ENCODE measurements at regions of chr9 and their contacts with region 1.

Region 1: GRCh38 chr9:91711755-91712601 is 238.1 kb downstream of the ROR2 start:
- DNase-seq: peak; percentile 87
- H3K4me3 Mint-ChIP-seq: no peak overlapping the region
- H3K27ac Mint-ChIP-seq: no peak overlapping the region
- H3K4me1 Mint-ChIP-seq: no peaks in the 10 kb centered on the region
- H3K27me3 Mint-ChIP-seq: peaks cover 25% of the 10 kb centered on the region

Region 2: DNA sequence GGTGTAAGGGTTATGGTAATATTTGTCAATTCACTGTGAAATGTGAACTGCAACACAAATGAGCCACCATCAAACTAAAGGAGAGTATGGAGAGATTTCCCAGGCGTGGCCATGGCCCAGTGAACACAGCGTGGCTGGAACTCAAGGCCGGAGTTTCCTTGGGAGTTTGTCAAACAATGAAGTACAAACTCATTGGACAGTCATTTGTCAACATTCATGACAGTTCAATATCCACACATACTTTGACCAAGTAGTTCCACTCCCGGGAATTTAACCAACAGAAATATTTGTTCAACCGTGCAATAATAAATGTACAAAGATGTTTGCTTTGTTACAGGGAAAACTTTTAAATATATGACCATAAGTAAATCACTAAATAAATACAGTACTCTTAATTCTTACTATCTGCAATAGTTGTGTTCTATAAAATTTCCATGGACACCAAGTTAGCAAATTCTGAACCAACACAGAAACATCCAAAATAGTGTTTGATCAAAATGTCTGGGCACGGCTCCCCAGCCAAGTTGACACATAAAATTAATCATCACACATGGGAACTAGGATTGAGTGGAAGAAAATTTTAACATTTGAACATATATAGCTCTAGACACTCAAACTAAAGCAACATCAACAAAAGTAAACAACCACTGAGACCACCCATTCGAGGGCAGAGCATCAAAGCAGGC is 1156.5 kb before region 1 on chr9:
- CTCF ChIA-PET with region 1: no interaction called
- POLR2A ChIA-PET with region 1: no interaction called
- intact Hi-C with region 1: no loop called
- DNase-seq: no peak
- H3K4me3 Mint-ChIP-seq: no peak overlapping the region
- H3K27ac Mint-ChIP-seq: no peak overlapping the region
- H3K4me1 Mint-ChIP-seq: no peaks in the 10 kb centered on the region
- H3K27me3 Mint-ChIP-seq: no peaks in the 10 kb centered on the region

Region 3: DNA sequence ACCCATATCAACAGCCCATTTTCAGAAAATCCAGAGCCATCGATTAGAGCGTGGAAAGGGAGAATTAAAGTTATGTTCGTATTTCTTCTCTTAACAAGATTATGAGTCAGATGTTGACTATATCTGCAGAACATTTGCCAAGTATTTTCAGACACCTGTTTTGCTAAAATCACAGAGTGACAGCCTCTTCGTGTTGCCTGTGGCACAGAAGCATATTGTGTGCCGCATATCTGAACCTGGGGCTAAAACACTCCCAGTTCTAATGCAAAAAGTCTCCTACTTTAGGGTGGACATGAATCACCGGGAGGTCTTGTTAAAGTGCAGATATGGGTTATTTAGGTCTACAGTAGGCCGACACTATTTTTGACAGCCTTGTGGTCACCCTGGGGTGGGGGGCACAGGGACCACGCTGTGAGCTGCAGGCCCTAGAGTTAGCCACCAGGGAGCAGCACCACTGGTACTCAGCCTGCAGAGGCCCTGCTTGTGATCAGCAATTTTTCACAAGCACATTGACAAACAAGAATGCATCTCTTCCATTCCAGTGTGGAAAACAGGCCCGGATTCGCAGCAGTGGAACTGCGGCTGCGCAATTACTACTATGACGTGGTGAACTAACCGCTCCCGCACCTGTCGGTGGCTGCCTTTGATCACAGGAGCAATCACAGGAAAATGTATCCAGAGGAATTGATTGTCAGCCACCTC is 816.8 kb before region 1 on chr9:
- CTCF ChIA-PET with region 1: no interaction called
- POLR2A ChIA-PET with region 1: no interaction called
- intact Hi-C with region 1: no loop called
- DNase-seq: no peak
- H3K4me3 Mint-ChIP-seq: no peak overlapping the region
- H3K27ac Mint-ChIP-seq: no peak overlapping the region
- H3K4me1 Mint-ChIP-seq: no peaks in the 10 kb centered on the region
- H3K27me3 Mint-ChIP-seq: peaks cover 4% of the 10 kb centered on the region

Region 4: DNA sequence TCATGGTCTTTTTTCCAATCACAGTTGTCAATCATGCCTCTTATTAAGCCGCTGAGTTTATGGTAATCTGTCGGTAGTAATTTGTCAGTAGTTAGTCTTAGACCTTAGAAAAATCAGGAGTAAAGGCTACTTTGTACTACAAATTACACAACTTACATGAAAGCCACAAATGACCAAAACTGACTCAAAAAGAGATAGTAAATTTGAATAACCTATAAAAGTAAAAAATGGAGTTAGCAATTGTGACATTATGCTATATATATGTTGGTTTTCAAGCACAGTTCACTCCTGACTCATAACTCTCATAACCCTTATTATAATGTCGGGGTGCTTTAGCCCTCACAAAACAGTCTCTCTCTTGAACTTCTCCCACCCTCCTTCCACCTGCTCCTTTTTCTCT is 13.7 kb before region 1 on chr9:
- CTCF ChIA-PET with region 1: no interaction called
- POLR2A ChIA-PET with region 1: no interaction called
- intact Hi-C with region 1: loop called (anchors 2 kb)
- DNase-seq: no peak
- H3K4me3 Mint-ChIP-seq: no peak overlapping the region
- H3K27ac Mint-ChIP-seq: no peak overlapping the region
- H3K4me1 Mint-ChIP-seq: peaks cover 3% of the 10 kb centered on the region
- H3K27me3 Mint-ChIP-seq: peaks cover 5% of the 10 kb centered on the region

Region 5: GRCh38 chr9:91865041-91865440 is 153.1 kb after region 1 on chr9:
- CTCF ChIA-PET with region 1: no interaction called
- POLR2A ChIA-PET with region 1: no interaction called
- intact Hi-C with region 1: no loop called
- DNase-seq: no peak
- H3K4me3 Mint-ChIP-seq: no peak overlapping the region
- H3K27ac Mint-ChIP-seq: no peak overlapping the region
- H3K4me1 Mint-ChIP-seq: no peaks in the 10 kb centered on the region
- H3K27me3 Mint-ChIP-seq: peaks cover 10% of the 10 kb centered on the region